ENCODE measurements at regions of chr12 and their contacts with region 1.

Region 1: DNA sequence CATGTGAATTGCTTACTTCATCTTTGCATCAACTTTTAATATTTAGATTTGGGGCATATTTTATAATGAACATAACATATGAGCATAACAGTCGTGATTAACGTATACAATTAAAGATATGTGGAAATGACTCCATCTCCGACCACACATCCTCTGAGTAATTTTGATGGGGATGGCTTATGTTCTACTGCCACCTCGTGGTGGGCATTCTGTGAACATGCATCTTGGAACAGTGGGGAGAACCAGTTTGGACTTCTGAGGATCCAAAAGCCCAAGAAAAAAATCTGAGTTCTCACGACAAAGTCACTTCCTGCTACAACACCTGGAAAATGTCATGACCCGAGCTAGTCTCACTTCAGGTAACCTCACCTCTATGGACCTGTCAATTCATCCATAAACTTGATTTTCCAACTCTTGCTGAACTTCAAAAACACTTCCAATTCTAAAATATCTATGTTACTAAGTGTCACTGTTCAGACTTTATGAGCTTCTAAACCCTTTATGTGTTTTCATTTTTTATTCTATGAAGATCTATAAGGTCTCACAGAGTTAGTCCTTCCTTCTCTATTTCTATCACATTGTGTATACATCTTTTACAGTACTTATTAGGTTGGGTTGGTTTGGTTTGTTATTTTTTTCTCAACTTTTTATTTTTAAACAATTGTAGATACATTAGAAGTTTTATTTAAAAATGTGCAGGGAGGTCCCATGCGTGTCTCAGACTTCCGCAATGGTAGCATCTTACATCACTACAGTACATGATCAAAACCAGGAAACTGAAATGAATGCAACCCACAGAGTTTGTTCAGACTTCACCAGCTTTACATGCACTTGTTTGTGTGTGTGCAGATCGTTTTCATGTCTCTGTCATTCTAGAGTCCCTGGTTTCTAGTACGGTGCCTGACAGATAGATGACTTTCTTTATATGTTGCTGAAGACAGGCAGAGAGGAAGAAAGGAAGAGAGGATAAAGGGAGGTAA is 38.2 kb upstream of the STAB2 start:
- DNase-seq: peak; percentile 64 to 81
- ATAC-seq: peak; percentile 93 to 99
- H3K4me3 ChIP-seq: no peak overlapping the region
- H3K27ac ChIP-seq: peak overlapping the region in 1 of 2 experiments; percentile 28; a peak in 1 of 6 replicates
- H3K4me1 ChIP-seq: peaks cover 8% of the 10 kb centered on the region; the same call in 1 of the 3 replicates
- CTCF ChIP-seq: peak; percentile 98
- EP300 ChIP-seq: no peak
- POLR2A ChIP-seq: no peak
- RAD21 ChIP-seq: peak; percentile 98 to 100

Region 2: DNA sequence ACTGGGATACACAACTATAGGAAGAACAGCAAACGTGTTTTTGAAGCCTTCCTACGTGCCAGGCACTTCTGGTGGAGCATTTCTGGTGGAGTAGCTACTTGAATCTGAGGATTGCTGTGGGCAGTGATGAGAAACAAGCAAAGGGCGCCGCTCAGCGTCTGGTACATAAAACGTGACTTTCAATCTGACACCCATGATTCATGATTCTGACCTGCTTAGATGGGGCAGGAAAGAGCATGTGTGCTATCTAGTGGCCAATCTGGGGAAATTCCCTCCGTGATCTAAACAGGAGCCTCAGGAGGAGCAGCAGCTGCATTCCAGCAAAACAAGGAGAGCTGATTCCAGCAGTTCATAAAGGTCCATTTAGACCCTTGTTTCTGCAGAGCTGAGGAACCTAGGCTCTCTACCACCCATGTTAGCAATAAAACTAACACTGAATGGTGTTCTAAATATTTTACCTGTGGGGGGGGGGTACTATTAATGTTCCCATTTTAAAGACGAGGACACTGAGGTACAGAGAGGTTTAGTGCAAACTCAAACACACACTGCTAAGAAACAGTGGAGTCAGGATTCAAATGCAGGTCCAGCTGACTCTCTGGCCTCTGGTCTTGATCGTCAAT is 669.7 kb before region 1 on chr12:
- CTCF ChIA-PET with region 1: interaction called, 89 read pairs
- POLR2A ChIA-PET with region 1: no interaction called
- DNase-seq: peak; percentile 75 to 91
- ATAC-seq: peak; percentile 89 to 95
- H3K4me3 ChIP-seq: no peak overlapping the region
- H3K27ac ChIP-seq: 0 out of 6 replicates have a peak overlapping the region, but pooled peaks of 1 of the 2 experiments have one; percentile 13
- H3K4me1 ChIP-seq: no peaks in the 10 kb centered on the region
- CTCF ChIP-seq: peak; percentile 90
- EP300 ChIP-seq: no peak
- POLR2A ChIP-seq: no peak
- RAD21 ChIP-seq: peak; percentile 85 to 90

Region 3: GRCh38 chr12:102948941-102949352 is 600.0 kb before region 1 on chr12:
- CTCF ChIA-PET with region 1: interaction called, 56 read pairs
- POLR2A ChIA-PET with region 1: no interaction called
- DNase-seq: peak; percentile 46 to 47
- ATAC-seq: peak in 1 of 2 experiments; percentile 62; a peak in 3 of 6 replicates
- H3K4me3 ChIP-seq: no peak overlapping the region
- H3K27ac ChIP-seq: no peak overlapping the region
- H3K4me1 ChIP-seq: no peaks in the 10 kb centered on the region
- CTCF ChIP-seq: peak; percentile 76
- EP300 ChIP-seq: no peak
- POLR2A ChIP-seq: no peak
- RAD21 ChIP-seq: peak; percentile 73 to 83

Region 4: DNA sequence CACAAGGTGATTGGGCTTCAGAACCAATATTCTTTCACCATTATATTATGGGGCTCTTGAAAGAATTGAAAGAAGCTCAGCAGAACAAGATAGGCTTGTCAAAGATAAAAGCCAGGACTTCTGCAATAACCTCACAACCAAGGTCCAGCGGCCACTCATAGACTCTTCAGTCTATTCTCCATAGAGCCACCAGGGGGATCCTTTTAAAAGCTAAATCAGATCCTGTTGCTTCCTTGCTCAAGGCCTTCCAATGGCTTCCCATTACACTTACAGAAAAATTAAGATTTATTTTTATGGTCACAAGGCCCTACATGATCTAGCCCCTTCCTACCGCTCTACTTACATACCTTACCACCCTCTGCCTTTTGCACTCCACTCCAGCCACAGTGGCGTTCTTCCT is 222.7 kb before region 1 on chr12:
- CTCF ChIA-PET with region 1: interaction called, 15 read pairs
- POLR2A ChIA-PET with region 1: no interaction called
- DNase-seq: peak; percentile 9 to 39
- ATAC-seq: peak in 1 of 2 experiments; percentile 82; a peak in 3 of 6 replicates
- H3K4me3 ChIP-seq: no peak overlapping the region
- H3K27ac ChIP-seq: no peak overlapping the region
- H3K4me1 ChIP-seq: no peaks in the 10 kb centered on the region
- CTCF ChIP-seq: 0 out of 3 replicates have a peak, but pooled peaks have one; percentile 13
- EP300 ChIP-seq: no peak
- POLR2A ChIP-seq: no peak
- RAD21 ChIP-seq: peak in 1 of 2 experiments; percentile 37; a peak in 2 of 5 replicates

Region 5: DNA sequence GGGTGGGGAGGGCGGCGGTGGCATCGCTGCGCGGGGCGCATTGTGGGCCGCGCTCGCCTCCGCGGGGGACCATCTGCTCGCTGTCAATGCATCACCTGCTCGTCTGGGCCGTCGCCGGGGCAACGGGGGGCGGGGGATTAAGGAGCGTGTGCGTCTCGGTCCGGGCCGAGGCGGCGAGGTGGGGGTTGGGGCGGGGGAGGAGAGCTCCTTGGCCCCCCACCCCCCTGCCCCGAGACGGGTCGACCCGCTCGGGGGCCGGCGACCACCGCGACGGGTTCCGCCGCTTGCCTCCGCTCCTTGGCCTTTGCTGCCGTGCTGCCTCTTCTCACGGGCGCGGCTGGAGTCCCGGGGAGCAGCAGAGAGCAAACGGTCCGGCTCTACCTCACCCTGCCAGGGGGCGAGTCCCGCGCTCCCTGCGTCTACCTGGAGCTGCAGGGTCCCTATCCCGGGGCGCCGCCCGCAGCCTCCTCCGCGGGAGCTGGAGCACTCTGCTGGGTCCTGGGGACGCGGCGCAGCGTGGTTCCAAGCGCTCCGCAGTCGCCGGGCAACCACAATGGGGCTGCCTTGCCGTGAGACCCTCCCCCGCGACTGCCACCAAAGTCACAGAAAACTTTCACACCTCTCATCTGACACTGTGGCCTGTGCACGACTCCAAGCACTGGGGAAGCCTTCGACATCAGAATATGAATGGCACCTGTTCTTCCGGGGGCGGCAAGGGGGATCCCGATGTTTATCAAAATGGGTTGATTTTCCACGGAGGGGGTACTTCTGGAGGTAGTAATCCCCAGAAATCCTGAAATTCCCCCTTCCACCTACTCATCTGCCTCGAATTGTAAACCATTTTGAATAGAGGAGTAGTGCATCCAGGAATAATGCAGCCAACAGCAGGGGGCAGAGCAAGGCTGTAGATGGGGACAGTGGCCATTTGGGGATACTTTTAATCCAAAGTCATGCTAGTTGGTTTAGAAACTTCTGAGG is 53.1 kb before region 1 on chr12 and contains the start of gene C12orf42:
- CTCF ChIA-PET with region 1: interaction called, 134 read pairs
- POLR2A ChIA-PET with region 1: no interaction called
- DNase-seq: peak; percentile 75 to 80
- ATAC-seq: peak; percentile 91 to 95
- H3K4me3 ChIP-seq: peak within 1 kb of the TSS; percentile 54
- H3K27ac ChIP-seq: peak within 1 kb of the TSS; percentile 26 to 72; a peak in 4 of 6 replicates
- H3K4me1 ChIP-seq: peaks cover 14% of the 10 kb centered on the region; the same call in 2 of the 3 replicates
- CTCF ChIP-seq: peak; percentile 86
- EP300 ChIP-seq: no peak
- POLR2A ChIP-seq: no peak
- RAD21 ChIP-seq: peak; percentile 85 to 92
- polyA plus RNA-seq, gene C12orf42: not detected in 2 replicates

Region 6: DNA sequence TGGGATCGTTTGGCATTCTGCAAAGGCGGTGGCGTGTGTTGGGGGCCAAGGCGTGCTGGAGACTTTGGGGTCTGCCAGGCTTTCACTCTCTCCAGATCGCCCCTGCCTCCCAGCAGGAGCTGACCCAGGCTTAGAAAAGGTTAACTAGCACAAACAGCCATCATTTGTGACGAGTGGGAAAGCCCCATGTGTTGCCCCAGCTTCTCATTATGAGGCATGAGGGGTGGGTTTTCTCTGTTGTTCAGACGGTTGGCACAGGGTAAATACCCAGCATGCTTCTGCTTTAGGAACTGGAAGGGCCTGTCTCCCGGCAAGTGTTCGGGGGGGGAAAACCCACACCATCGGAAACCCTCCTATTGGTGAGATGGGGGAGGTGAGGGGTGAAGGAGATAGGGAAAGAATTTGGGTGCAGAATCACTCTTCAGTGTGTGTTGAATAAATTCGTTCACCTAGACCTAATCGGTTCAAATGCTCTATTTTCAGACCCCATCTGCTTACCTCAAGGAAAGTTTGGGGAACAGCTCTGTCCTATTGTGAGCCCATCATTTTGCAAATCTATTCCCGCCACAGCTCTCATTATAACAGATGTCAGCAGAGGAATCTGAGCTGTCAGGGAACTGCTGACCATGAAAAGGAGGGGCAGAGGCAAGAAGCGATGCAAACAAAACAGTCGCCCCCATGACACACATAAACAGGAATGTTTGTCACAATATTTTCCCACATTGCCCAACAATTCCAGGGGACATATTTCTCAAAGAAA is 18.4 kb before region 1 on chr12:
- CTCF ChIA-PET with region 1: interaction called, 45 read pairs
- POLR2A ChIA-PET with region 1: no interaction called
- DNase-seq: no peak
- ATAC-seq: no peak
- H3K4me3 ChIP-seq: no peak overlapping the region
- H3K27ac ChIP-seq: no peak overlapping the region
- H3K4me1 ChIP-seq: no peaks in the 10 kb centered on the region
- CTCF ChIP-seq: no peak
- EP300 ChIP-seq: no peak
- POLR2A ChIP-seq: no peak
- RAD21 ChIP-seq: no peak

Region 7: DNA sequence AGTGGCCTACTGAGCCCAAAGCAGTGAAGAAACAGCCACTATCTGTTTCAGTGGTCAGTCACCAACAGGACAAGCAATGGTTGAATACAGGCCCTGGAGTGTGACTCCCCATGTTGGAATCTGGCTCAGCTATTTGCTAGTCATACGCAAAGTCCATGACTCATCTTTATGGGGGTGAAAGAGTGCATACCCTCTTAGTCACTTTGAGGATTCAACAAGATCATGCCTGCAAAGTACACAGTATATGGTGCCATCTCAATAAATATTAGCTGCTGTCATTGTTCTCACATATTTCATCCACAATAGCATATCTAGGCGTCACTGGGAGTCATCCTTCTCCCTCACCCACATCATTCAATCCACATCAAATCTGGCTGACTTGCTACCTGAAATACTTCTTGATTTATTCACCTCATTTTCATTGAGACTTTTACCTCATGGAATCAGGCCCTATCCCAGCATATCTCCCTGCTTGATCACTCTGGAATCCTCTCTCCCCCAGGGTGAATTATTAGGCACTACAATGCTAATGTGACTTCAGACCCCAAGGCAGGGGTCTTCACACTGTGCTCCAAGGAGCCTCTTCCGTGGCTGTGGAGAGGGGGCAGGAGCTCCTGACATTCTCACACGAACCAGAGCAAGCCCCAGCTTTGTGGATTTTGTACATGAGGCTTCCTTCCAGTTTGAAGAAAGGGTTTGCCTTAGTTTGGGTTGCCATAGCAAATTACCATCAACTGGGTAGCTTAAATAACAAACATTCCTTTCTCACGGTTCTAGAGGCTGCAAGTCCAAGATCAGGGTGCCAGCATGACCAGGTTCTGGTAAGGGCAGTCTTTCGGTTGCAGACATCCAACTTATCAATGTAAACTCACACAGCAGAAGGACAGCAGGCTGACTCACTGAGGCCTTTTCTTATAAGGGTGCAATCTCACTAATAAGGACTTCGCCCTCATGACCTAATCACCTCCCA is 12.0 kb after region 1 on chr12:
- CTCF ChIA-PET with region 1: interaction called, 37 read pairs
- POLR2A ChIA-PET with region 1: no interaction called
- DNase-seq: peak; percentile 89 to 99
- ATAC-seq: peak; percentile 96 to 98
- H3K4me3 ChIP-seq: peak overlapping the region; percentile 15; the same call in 1 of the 3 replicates
- H3K27ac ChIP-seq: peak overlapping the region; percentile 87 to 89
- H3K4me1 ChIP-seq: peaks cover 22% of the 10 kb centered on the region
- CTCF ChIP-seq: no peak
- EP300 ChIP-seq: peak; percentile 88 to 95
- POLR2A ChIP-seq: no peak
- RAD21 ChIP-seq: peak; percentile 1 to 33; a peak in 3 of 5 replicates

Region 8: DNA sequence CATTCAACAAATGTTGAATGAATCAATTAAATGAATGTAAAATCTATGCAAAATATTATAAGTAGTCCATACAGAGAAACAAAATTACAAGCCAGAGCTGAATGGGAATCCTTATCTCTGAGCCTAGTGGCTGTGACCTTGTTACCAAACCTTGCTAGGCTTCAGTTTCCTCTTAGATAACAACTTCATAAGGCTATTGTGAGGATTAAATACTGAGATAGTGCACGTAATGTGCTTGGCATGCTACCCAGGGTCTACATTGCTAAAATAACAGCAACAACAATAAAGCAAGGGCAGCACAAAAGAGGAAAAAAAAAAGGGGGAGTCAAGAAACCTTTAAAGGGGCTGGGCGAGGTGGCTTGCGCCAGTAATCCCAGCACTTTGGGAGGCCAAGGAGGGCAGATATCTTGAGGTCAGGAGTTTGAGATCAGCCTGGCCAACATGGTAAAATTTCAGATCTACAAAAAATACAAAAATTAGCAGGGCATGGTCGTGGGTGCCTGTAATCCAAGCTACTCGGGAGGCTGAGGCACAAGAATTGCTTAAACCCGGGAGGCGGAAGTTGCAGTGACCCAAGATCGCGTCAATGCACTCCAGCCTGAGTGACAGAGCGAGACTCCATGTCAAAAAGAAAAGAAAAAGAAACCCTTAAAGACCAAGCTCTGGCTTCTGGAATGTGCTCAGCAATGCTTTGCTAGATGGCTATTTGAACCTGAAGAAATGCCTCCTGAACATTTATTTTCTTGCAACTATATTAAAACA is 52.2 kb after region 1 on chr12:
- CTCF ChIA-PET with region 1: no interaction called
- POLR2A ChIA-PET with region 1: no interaction called
- DNase-seq: no peak
- ATAC-seq: no peak
- H3K4me3 ChIP-seq: no peak overlapping the region
- H3K27ac ChIP-seq: no peak overlapping the region
- H3K4me1 ChIP-seq: no peaks in the 10 kb centered on the region
- CTCF ChIP-seq: no peak
- EP300 ChIP-seq: no peak
- POLR2A ChIP-seq: no peak
- RAD21 ChIP-seq: no peak

Region 9: DNA sequence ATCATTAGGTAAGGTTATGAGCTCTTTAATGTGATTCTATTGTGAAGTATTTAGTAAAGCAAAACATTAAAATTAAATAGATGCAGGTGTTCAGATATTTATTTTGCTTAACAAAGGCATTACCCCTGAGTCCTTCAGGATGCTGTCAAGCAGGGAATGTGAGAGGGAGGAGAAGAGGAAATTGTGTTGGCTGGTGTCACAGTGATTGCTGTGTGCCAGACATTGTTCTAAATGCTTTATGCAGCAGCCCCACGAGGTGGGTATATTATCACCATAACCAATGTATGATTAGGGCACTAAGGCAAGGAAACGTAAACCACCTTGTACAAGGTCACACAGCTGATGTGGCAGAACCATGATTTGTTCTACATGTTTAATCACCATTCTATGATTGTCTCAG is 118.2 kb after region 1 on chr12:
- CTCF ChIA-PET with region 1: no interaction called
- POLR2A ChIA-PET with region 1: no interaction called
- DNase-seq: no peak
- ATAC-seq: no peak
- H3K4me3 ChIP-seq: no peak overlapping the region
- H3K27ac ChIP-seq: no peak overlapping the region
- H3K4me1 ChIP-seq: peaks cover 4% of the 10 kb centered on the region
- CTCF ChIP-seq: no peak
- EP300 ChIP-seq: no peak
- POLR2A ChIP-seq: no peak
- RAD21 ChIP-seq: no peak

Region 10: GRCh38 chr12:103742349-103742932 is 193.5 kb after region 1 on chr12:
- CTCF ChIA-PET with region 1: no interaction called
- POLR2A ChIA-PET with region 1: no interaction called
- DNase-seq: peak in 1 of 2 experiments; percentile 49
- ATAC-seq: peak; percentile 36 to 60; a peak in 4 of 6 replicates
- H3K4me3 ChIP-seq: no peak overlapping the region
- H3K27ac ChIP-seq: no peak overlapping the region
- H3K4me1 ChIP-seq: peaks cover 5% of the 10 kb centered on the region; the same call in 2 of the 3 replicates
- CTCF ChIP-seq: no peak
- EP300 ChIP-seq: no peak
- POLR2A ChIP-seq: no peak
- RAD21 ChIP-seq: no peak